ENCODE measurements at regions of chr19 and their contacts with region 1.

Region 1: DNA sequence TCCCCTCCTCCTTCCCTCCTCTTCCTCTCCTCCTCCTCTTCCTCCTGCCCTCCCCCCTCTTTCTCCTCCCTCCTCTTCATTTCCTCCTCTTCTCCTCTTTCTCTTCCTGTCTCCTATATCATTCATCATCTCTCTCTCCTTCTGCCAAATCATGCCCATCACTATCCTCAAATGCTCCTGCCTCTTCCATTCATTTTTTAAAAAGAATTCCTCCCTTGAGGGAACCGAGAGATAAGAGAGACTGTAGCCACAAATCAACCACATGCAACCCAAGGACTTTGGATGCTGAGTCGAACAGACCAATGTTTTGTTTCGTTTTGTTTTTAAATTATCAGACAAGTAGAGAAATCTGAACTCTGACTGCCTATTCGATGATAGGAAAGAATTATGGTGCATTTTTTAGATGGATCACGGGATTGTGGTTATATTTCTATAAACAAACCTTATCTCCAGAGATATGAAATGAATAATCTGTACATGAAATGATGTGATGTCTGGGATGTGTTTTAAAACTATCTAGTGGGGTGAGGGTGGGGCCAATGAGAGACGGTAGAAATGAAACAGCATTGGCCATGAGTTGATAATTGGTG is 9.5 kb upstream of the ZNF541 start:
- DNase-seq: no peak
- ATAC-seq: no peak
- H3K4me3 ChIP-seq: no peak overlapping the region
- H3K27ac ChIP-seq: no peak overlapping the region
- H3K4me1 ChIP-seq: no peaks in the 10 kb centered on the region
- CTCF ChIP-seq: no peak
- EP300 ChIP-seq: no peak
- POLR2A ChIP-seq: no peak
- RAD21 ChIP-seq: no peak

Region 2: GRCh38 chr19:47540728-47541127 is 41.7 kb before region 1 on chr19:
- CTCF ChIA-PET with region 1: interaction called, 10 read pairs
- POLR2A ChIA-PET with region 1: no interaction called
- DNase-seq: peak; percentile 43 to 46
- ATAC-seq: peak; percentile 52 to 67; a peak in 3 of 6 replicates
- H3K4me3 ChIP-seq: no peak overlapping the region
- H3K27ac ChIP-seq: no peak overlapping the region
- H3K4me1 ChIP-seq: no peaks in the 10 kb centered on the region
- CTCF ChIP-seq: peak; percentile 31; the same call in 2 of the 3 replicates
- EP300 ChIP-seq: no peak
- POLR2A ChIP-seq: no peak
- RAD21 ChIP-seq: peak in 1 of 2 experiments; percentile 56; a peak in 2 of 5 replicates